ENCODE measurements at regions of chr9 and their contacts with region 1.

Region 1: DNA sequence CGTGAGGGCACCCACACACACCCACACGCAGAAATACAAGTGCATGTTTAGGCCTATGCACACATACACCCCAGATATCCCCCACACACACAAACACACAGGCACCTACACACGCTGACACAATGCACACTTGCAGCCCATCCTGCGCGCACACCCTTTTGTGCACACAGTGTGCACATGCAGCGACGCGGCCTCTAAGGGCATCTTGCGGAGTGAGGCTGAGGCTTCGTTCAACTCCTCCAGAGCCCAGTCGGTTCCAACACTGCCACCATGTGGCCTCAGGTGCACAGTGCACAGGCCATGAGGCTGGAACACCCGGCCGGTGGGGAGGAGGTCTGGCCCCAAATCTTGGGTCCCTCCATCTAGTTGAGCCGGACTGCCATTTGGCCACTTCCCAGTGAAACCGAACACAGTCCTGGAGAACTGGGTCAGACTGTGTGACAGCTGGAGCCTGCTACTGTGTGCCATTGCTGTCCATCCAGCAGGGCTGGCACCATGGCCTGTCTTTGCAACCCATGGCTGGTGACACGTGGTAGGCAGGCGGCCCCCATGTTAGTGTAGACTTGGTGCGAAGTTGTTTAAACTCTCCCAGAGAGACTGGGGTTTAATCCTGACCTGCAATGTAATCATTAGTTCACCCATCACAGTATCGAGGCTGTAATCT is 97.7 kb upstream of the MVB12B start:
- DNase-seq: peak; percentile 42 to 70
- H3K4me3 ChIP-seq: no peak overlapping the region
- H3K27ac ChIP-seq: no peak overlapping the region
- H3K4me1 ChIP-seq: no peaks in the 10 kb centered on the region
- H3K27me3 ChIP-seq: no peaks in the 10 kb centered on the region
- CTCF ChIP-seq: peak; percentile 75 to 80 (median 78)
- POLR2A ChIP-seq: no peak

Region 2: GRCh38 chr9:124716808-124717207 is 1512.1 kb before region 1 on chr9:
- intact Hi-C with region 1: no loop called
- DNase-seq: no peak
- H3K4me3 ChIP-seq: no peak overlapping the region
- H3K27ac ChIP-seq: no peak overlapping the region
- H3K4me1 ChIP-seq: no peaks in the 10 kb centered on the region
- H3K27me3 ChIP-seq: no peaks in the 10 kb centered on the region
- CTCF ChIP-seq: no peak
- POLR2A ChIP-seq: no peak

Region 3: DNA sequence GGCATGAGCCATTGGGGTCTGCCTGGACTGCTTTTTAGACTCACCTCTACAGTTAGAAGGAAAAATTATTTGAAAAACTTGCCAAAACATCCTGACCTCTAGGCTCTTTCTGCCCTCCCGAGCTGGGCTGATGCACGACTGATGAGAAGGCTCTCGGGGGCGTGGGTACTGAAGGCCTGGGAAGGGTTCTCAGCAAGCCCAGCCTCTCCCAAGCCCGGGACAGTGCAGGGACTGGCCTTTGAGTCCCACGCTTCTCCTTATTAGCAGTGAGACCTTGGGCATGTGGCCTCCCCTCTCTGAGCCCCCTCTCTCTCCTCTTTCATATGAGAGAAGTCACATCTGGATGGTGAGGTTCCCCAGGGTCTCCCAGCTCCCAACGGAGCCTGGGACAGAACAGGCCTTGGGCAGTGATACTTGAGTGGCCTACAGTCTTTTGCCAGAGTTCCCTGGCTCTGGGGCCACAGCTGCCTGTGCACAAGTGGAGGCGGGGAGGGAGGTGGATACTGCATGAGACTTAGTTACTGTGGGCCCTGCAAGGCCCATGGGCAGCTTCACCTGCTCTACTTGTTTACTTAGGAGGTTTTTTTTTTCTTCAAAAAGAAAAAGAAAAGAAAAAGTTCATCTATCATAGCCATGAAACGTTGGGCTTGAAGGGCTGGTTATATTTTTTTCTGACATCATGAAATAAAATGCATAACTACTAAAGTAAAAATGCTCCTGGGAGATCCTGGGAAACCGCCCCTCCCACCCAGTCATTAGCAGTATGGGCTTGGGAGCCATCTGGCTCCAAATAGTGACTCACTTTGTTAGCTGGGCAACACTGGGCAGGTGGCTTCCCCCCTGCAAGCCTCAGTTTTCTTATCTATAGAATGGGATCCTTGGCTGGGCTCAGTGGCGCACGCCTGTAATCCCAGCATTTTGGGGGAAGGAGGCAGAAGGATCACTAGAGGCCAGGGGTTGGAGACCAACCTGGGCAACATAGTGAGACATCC is 827.9 kb before region 1 on chr9:
- intact Hi-C with region 1: loop called (anchors 5 kb)
- DNase-seq: no peak
- H3K4me3 ChIP-seq: no peak overlapping the region
- H3K27ac ChIP-seq: no peak overlapping the region
- H3K4me1 ChIP-seq: no peaks in the 10 kb centered on the region
- H3K27me3 ChIP-seq: no peaks in the 10 kb centered on the region
- CTCF ChIP-seq: no peak
- POLR2A ChIP-seq: no peak